Mammary epithelial cell (primary cell): ENCODE measurements at regions of chr9 and their contacts with region 1.

Region 1: DNA sequence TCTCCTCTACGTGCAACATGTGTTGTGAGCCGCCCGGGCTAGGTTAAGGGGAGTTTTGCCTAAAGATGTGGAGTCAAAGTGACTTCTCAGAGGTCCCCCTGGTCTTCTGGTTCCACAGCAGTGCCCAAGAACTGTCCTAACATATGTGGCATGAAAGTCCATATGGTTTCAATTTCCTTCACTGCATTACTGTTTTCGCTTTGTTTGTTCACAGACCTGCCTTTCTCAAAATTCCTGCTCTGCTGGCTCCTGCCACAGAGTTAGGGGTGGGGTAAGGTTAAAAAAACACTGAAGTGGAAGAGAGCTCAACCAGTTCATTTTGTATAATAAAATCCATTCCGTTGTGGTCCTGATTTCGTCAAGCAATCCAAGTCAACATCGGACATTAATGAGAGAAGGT is 289.4 kb downstream of the DMAC1 start:
- DNase-seq: no peak
- H3K4me3 ChIP-seq: no peak overlapping the region
- H3K27ac ChIP-seq: no peak overlapping the region
- H3K4me1 ChIP-seq: no peaks in the 10 kb centered on the region
- H3K27me3 ChIP-seq: peaks cover 5% of the 10 kb centered on the region
- CTCF ChIP-seq: no peak

Region 2: DNA sequence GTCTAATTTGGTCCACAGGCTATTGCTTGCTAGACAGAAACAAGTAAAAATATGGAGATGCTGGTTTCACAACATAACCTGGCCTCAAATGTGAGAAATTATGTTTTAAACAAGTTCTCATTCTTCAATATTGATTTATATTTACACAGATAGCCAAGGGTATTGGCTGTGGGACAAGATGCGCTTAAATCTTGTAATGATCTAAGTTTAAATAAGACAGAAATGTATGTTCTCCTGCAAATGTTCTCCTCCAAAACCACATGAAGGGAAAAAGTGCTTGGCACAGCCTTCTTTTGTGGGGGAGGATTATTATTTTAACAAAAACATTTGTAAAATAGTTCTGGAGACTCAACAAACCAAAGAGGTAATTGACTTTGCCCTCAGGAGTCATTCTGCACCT is 66.7 kb before region 1 on chr9:
- CTCF ChIA-PET with region 1: no interaction called
- dilution Hi-C with region 1: no loop called
- in situ Hi-C with region 1: no loop called
- intact Hi-C with region 1: loop called (anchors 10 kb)
- DNase-seq: peak; percentile 11
- H3K4me3 ChIP-seq: no peak overlapping the region
- H3K27ac ChIP-seq: no peak overlapping the region
- H3K4me1 ChIP-seq: peaks cover 16% of the 10 kb centered on the region
- H3K27me3 ChIP-seq: no peaks in the 10 kb centered on the region
- CTCF ChIP-seq: no peak